H1 (cell line): ENCODE measurements at regions of chr6 and their contacts with region 1.

Region 1: DNA sequence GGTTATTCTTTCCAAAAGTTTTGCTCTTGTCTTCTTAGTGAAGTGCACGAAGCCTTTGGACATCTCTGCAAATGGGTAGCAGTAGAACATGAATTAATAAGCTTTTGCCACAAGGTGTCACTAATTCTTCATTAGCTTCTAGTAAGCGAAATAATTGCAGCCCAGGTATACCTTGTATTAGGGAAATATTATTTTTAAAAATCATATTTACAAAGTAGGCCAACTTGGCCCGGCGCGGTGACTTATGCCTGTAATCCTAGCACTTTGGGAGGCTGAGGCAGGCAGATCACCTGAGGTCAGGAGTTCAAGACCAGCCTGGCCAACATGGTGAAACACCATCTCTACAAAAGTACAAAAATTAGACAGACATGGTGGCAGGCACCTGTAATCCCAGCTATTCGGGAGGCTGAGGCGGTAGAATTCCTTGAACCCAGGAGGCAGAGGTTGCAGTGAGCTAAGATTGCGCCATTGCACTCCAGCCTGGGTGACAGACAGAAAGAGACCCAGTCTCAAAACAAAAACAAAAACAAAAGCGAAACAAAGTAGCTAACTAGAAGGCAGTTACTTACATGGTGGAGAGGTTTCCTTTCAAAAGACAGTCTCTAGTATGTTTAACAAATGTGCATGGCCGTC is 8.8 kb upstream of the RSPH3 start:
- DNase-seq: no peak
- H3K4me3 ChIP-seq: no peak overlapping the region
- H3K27ac ChIP-seq: no peak overlapping the region
- H3K4me1 ChIP-seq: no peaks in the 10 kb centered on the region
- H3K27me3 ChIP-seq: no peaks in the 10 kb centered on the region
- CTCF ChIP-seq: peak in 2 of 3 experiments; percentile 15 to 43; a peak in 2 of 4 replicates
- EP300 ChIP-seq: no peak
- POLR2A ChIP-seq: no peak
- RAD21 ChIP-seq: peak; percentile 48 to 51

Region 2: GRCh38 chr6:158972241-158973233 is 36.2 kb before region 1 on chr6:
- CTCF ChIA-PET with region 1: no interaction called
- POLR2A ChIA-PET with region 1: no interaction called
- DNase-seq: no peak
- H3K4me3 ChIP-seq: no peak overlapping the region
- H3K27ac ChIP-seq: no peak overlapping the region
- H3K4me1 ChIP-seq: no peaks in the 10 kb centered on the region
- H3K27me3 ChIP-seq: no peaks in the 10 kb centered on the region
- CTCF ChIP-seq: peak in 2 of 3 experiments; percentile 20 to 36; a peak in 2 of 4 replicates
- EP300 ChIP-seq: no peak
- POLR2A ChIP-seq: no peak
- RAD21 ChIP-seq: peak; percentile 84 to 91

Region 3: GRCh38 chr6:159033160-159034049 is 24.6 kb after region 1 on chr6:
- CTCF ChIA-PET with region 1: interaction called, 10 read pairs
- POLR2A ChIA-PET with region 1: no interaction called
- DNase-seq: no peak
- H3K4me3 ChIP-seq: no peak overlapping the region
- H3K27ac ChIP-seq: no peak overlapping the region
- H3K4me1 ChIP-seq: no peaks in the 10 kb centered on the region
- H3K27me3 ChIP-seq: no peaks in the 10 kb centered on the region
- CTCF ChIP-seq: no peak
- EP300 ChIP-seq: no peak
- POLR2A ChIP-seq: no peak
- RAD21 ChIP-seq: no peak

Region 4: GRCh38 chr6:159042003-159042825 is 33.4 kb after region 1 on chr6:
- CTCF ChIA-PET with region 1: interaction called, 37 read pairs
- POLR2A ChIA-PET with region 1: no interaction called
- DNase-seq: peak; percentile 59 to 73
- H3K4me3 ChIP-seq: peak overlapping the region in 1 of 4 experiments; percentile 24; a peak in 1 of 8 replicates
- H3K27ac ChIP-seq: peak overlapping the region; percentile 69
- H3K4me1 ChIP-seq: no peaks in the 10 kb centered on the region; a peak in 1 of 7 replicates
- H3K27me3 ChIP-seq: no peaks in the 10 kb centered on the region
- CTCF ChIP-seq: peak; percentile 88 to 97 (median 92)
- EP300 ChIP-seq: no peak
- POLR2A ChIP-seq: no peak
- RAD21 ChIP-seq: peak; percentile 83 to 87

Region 5: GRCh38 chr6:159125014-159125609 is 116.3 kb after region 1 on chr6:
- CTCF ChIA-PET with region 1: interaction called, 11 read pairs
- POLR2A ChIA-PET with region 1: no interaction called
- DNase-seq: no peak
- H3K4me3 ChIP-seq: no peak overlapping the region
- H3K27ac ChIP-seq: no peak overlapping the region
- H3K4me1 ChIP-seq: no peaks in the 10 kb centered on the region
- H3K27me3 ChIP-seq: no peaks in the 10 kb centered on the region; a peak in 1 of 7 replicates
- CTCF ChIP-seq: peak in 2 of 3 experiments; percentile 2 to 6; a peak in 2 of 4 replicates
- EP300 ChIP-seq: no peak
- POLR2A ChIP-seq: no peak
- RAD21 ChIP-seq: no peak